HEK293 (cell line): ENCODE measurements at regions of chr20 and their contacts with region 1.

Region 1: DNA sequence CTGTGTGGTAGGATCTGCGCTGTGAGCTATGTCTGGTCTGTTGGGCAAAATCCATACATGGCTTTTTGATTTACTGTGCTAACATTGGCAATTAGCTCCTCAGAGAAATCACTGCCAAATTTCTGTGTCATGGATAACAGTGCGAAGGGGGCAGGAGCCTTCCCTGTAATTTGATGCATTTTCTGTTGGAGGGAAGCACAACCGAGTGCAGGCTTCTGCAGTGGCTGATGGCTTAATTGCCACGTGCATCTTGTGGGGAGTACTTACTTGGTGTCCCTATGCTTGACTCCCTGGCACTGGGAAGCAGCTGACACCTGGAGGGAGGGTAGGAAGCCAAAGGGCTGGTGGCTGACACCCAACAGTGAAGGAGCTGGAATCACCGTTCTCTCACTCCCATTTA is 99.3 kb upstream of the PROKR2 start:
- H3K4me3 ChIP-seq: no peak overlapping the region
- H3K27ac ChIP-seq: no peak overlapping the region
- H3K4me1 ChIP-seq: no peaks in the 10 kb centered on the region
- CTCF ChIP-seq: no peak

Region 2: DNA sequence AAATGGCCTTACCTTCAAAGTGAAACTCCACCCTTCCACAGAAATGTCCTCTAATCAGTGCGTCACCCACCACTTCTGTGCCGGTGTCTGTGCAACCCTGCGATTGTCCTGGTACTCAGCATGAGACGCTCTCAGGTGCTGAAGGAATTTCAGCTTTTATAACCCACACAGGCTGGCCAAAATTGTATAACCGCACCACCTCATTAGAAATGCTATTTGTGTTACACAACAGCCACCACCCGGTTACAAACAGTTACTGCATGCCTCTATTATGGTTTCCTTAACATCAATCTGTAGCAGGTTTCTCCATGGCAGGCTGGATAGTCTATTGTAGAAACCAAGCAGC is 466.3 kb before region 1 on chr20:
- CTCF ChIA-PET with region 1: no interaction called
- POLR2A ChIA-PET with region 1: no interaction called
- H3K4me3 ChIP-seq: no peak overlapping the region
- H3K27ac ChIP-seq: no peak overlapping the region
- H3K4me1 ChIP-seq: no peaks in the 10 kb centered on the region
- CTCF ChIP-seq: 0 out of 2 replicates have a peak, but pooled peaks have one; percentile 25

Region 3: DNA sequence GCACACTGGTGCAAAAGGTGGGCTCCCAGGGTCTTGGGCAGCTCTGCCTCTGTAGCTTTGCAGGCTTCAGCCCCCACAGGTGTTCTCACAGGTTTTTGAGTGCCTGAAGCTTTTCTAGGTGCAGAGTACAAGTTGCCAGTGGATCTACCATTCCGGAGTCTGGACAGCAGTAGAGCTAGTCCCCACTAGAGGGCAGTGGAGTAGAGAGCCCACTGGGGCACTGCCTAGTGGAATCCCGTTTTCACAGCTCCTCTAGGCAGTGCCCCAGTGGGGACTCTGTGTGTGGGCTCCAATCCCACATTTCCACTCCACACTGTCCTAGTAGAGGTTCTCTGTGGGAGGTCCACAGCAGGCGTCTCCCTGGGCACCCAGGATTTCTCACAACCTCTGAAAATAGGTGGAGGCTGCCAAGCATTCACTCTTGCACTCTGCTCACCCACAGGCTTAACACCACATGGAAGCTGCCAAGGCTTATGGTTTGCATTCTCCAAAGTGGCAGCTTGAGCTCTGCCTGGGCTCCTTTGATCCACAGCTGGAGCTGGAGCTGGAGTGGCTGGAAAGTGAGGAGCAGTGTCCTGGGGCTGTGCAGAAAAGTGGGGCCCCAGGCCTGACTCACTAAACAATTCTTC is 13.1 kb before region 1 on chr20:
- CTCF ChIA-PET with region 1: interaction called, 10 read pairs
- POLR2A ChIA-PET with region 1: no interaction called
- H3K4me3 ChIP-seq: no peak overlapping the region
- H3K27ac ChIP-seq: no peak overlapping the region
- H3K4me1 ChIP-seq: no peaks in the 10 kb centered on the region
- CTCF ChIP-seq: no peak

Region 4: DNA sequence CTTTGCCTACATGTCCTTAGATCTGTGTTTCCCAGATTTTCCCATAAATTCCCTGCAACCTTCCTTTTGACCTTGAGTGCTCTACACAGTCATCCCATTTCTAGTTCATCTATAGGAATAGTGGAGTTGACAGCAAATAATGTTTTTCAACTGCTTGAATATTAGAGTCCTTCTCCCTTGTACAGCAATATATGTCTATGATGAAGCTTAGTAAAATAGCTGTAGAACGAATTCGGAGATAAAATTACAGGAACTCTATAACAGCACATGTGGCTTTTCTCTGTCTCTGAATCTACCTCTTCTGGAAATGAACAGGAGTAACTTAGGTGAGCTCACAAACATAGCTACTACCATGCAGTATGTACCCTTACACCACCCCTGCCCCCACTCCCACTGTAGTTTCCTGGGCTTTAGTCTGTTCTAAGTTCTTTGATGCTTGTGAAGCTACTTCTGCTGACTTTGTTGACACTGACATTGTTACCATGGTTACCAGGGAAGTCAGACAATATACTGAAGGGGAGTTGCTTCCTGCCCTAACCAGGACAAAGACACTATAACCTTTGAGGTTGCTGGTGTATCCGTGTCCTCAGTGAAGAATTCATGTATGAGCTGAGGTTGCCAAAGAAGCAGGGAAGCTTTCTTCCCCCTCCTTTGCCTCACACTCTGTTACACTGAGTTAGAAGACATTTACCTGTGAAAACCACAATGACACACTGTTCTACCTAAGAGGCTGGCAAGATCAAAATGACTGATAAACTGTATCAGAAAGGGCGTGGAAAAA is 298.4 kb after region 1 on chr20:
- CTCF ChIA-PET with region 1: no interaction called
- POLR2A ChIA-PET with region 1: no interaction called
- H3K4me3 ChIP-seq: no peak overlapping the region
- H3K27ac ChIP-seq: no peak overlapping the region
- H3K4me1 ChIP-seq: no peaks in the 10 kb centered on the region
- CTCF ChIP-seq: no peak